Calu3 (cell line): ENCODE measurements at regions of chr6 and their contacts with region 1.

Region 1: DNA sequence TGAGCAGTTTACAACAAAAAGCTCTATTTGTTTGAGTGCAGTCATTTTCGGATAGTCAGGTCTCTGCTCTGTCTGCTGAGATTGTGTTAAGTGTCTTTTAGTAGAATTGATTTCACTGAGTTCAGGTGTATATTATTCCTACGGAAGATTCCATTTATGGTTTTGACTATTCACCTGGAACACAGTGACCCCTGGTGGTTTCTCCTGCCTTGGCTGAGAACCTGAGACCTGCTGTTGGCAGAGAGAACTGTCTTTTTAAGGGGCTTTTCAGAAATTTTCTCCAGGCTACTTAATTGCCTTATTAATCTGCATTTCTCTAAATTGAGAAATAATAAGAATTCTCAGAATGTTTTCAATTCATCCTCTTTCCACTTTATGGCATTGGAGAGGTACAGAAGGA is 508.0 kb downstream of the TBC1D32 start:
- DNase-seq: peak; percentile 73
- H3K4me3 Mint-ChIP-seq: no peak overlapping the region
- H3K27ac Mint-ChIP-seq: no peak overlapping the region
- H3K4me1 Mint-ChIP-seq: no peaks in the 10 kb centered on the region
- H3K27me3 Mint-ChIP-seq: no peaks in the 10 kb centered on the region
- CTCF ChIP-seq: peak; percentile 59

Region 2: GRCh38 chr6:120405947-120406346 is 420.3 kb before region 1 on chr6:
- CTCF ChIA-PET with region 1: no interaction called
- intact Hi-C with region 1: loop called (anchors 2 kb)
- DNase-seq: no peak
- H3K4me3 Mint-ChIP-seq: no peak overlapping the region
- H3K27ac Mint-ChIP-seq: no peak overlapping the region
- H3K4me1 Mint-ChIP-seq: no peaks in the 10 kb centered on the region
- H3K27me3 Mint-ChIP-seq: no peaks in the 10 kb centered on the region
- CTCF ChIP-seq: no peak

Region 3: DNA sequence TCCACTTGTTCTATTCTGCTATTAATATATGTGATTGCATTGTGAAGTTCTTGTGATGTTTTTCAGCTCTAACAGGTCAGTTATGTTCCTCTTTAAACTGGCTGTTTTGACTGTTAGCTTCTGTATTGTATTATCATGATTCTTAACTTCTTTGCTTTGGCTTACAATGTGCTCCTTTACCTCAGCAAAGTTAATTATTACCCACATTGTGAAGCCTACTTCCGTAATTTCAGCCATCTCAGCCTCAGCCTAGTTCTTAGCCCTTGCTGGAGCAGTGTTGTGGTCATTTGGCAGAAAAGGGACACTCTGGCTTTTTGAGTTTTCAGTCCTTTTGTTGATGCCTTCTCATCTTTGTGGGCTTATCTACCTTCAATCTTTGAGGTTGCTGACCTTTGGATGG is 67.8 kb after region 1 on chr6:
- CTCF ChIA-PET with region 1: no interaction called
- intact Hi-C with region 1: no loop called
- DNase-seq: peak; percentile 21
- H3K4me3 Mint-ChIP-seq: no peak overlapping the region
- H3K27ac Mint-ChIP-seq: peak overlapping the region; percentile 20
- H3K4me1 Mint-ChIP-seq: peaks cover 9% of the 10 kb centered on the region
- H3K27me3 Mint-ChIP-seq: no peaks in the 10 kb centered on the region
- CTCF ChIP-seq: no peak

Region 4: GRCh38 chr6:121563281-121563680 is 737.0 kb after region 1 on chr6:
- CTCF ChIA-PET with region 1: no interaction called
- intact Hi-C with region 1: no loop called
- DNase-seq: no peak
- H3K4me3 Mint-ChIP-seq: no peak overlapping the region
- H3K27ac Mint-ChIP-seq: no peak overlapping the region
- H3K4me1 Mint-ChIP-seq: no peaks in the 10 kb centered on the region
- H3K27me3 Mint-ChIP-seq: no peaks in the 10 kb centered on the region
- CTCF ChIP-seq: no peak